ENCODE measurements at regions of chrX and their contacts with region 1.

Region 1: GRCh38 chrX:115642895-115643530 is 82.0 kb downstream of the PLS3 start:
- DNase-seq: peak; percentile 14
- H3K4me3 ChIP-seq: no peak overlapping the region
- H3K27ac ChIP-seq: no peak overlapping the region
- H3K4me1 ChIP-seq: no peaks in the 10 kb centered on the region
- H3K27me3 ChIP-seq: no peaks in the 10 kb centered on the region
- CTCF ChIP-seq: peak; percentile 72 to 88 (median 87)
- POLR2A ChIP-seq: no peak

Region 2: GRCh38 chrX:115330498-115331168 is 312.4 kb before region 1 on chrX:
- intact Hi-C with region 1: loop called (anchors 2 kb)
- DNase-seq: peak; percentile 5
- H3K4me3 ChIP-seq: no peak overlapping the region
- H3K27ac ChIP-seq: no peak overlapping the region
- H3K4me1 ChIP-seq: no peaks in the 10 kb centered on the region
- H3K27me3 ChIP-seq: no peaks in the 10 kb centered on the region
- CTCF ChIP-seq: peak; percentile 56 to 67 (median 62)
- POLR2A ChIP-seq: no peak